HepG2 (cell line): ENCODE measurements at regions of chr6 and their contacts with region 1.

Region 1: GRCh38 chr6:56902641-56903464 is 52.1 kb upstream of the BEND6 start:
- DNase-seq: peak; percentile 25
- ATAC-seq: peak; percentile 54
- H3K4me3 ChIP-seq: no peak overlapping the region
- H3K27ac ChIP-seq: no peak overlapping the region
- H3K4me1 ChIP-seq: peaks cover 11% of the 10 kb centered on the region; the same call in 1 of the 2 replicates
- H3K27me3 ChIP-seq: peaks cover 0 to 1% of the 10 kb centered on the region in 2 experiments; a peak in 1 of 5 replicates
- CTCF ChIP-seq: peak; percentile 67
- EP300 ChIP-seq: no peak
- POLR2A ChIP-seq: no peak
- RAD21 ChIP-seq: peak; percentile 28; the same call in 1 of the 2 replicates

Region 2: GRCh38 chr6:56862415-56863175 is 40.3 kb before region 1 on chr6:
- CTCF ChIA-PET with region 1: no interaction called
- POLR2A ChIA-PET with region 1: no interaction called
- in situ Hi-C with region 1: no loop called
- intact Hi-C with region 1: no loop called
- DNase-seq: no peak
- ATAC-seq: no peak
- H3K4me3 ChIP-seq: no peak overlapping the region
- H3K27ac ChIP-seq: no peak overlapping the region
- H3K4me1 ChIP-seq: 0 out of 2 replicates have a peak, but pooled peaks cover 11% of the 10 kb centered on the region
- H3K27me3 ChIP-seq: no peaks in the 10 kb centered on the region
- CTCF ChIP-seq: no peak
- EP300 ChIP-seq: no peak
- POLR2A ChIP-seq: no peak
- RAD21 ChIP-seq: no peak

Region 3: DNA sequence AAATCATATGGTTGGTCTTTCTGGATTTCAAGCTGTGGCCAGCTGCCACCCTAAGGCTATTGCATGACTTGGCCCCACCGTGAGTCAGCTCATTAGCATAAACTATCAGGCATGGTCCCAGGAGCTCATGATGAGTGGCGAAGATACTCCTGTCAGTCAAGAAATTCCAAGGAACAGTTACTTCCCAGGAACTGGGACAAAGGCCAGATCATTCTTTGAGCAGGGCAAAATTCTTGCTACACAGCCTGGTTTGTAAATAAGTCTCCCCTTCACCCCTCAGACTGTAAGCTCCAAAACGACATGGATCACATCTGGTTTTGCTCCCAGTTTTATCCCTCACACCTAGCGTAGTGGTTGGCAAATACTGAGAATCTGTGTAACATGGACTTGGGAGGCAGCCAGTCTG is 110.7 kb after region 1 on chr6:
- CTCF ChIA-PET with region 1: no interaction called
- POLR2A ChIA-PET with region 1: no interaction called
- in situ Hi-C with region 1: loop called (anchors 10 kb)
- intact Hi-C with region 1: no loop called
- DNase-seq: no peak
- ATAC-seq: no peak
- H3K4me3 ChIP-seq: no peak overlapping the region
- H3K27ac ChIP-seq: no peak overlapping the region
- H3K4me1 ChIP-seq: no peaks in the 10 kb centered on the region
- H3K27me3 ChIP-seq: peaks cover 0 to 4% of the 10 kb centered on the region in 2 experiments; a peak in 1 of 5 replicates
- CTCF ChIP-seq: no peak
- EP300 ChIP-seq: no peak
- POLR2A ChIP-seq: no peak
- RAD21 ChIP-seq: no peak

Region 4: DNA sequence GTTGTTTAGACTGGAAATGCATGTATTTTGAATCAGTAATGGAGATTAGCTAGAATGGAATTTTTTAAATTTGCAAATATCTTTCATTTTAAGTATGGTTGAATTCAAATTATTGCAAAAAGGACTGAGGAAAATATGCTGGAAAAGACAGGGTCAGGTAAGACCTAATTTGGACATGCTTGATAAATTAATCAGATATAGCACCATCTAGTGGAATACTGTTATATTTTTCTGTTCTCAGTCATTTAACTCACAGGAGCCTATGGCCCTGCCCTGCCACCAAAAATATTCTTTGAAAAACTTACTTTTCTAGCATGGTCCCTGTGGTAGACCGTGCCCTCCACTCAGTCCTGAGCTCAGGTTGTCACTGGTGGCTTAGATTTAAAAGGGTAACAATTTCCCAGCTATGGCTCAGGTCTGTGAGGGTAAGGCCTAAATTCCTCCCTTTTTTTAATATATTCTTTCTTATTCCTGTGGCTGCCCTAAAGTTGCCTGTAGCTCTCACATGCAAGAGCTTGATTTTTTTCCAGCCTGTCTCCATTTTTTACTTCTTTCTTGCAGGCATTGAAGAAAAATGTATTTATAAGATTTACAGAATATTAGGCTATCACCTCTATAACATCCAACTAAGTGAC is 118.3 kb after region 1 on chr6:
- CTCF ChIA-PET with region 1: interaction called, 24 read pairs
- POLR2A ChIA-PET with region 1: no interaction called
- in situ Hi-C with region 1: loop called (anchors 10 kb)
- intact Hi-C with region 1: loop called (anchors 1 kb)
- DNase-seq: peak; percentile 46
- ATAC-seq: peak; percentile 91
- H3K4me3 ChIP-seq: no peak overlapping the region
- H3K27ac ChIP-seq: no peak overlapping the region
- H3K4me1 ChIP-seq: no peaks in the 10 kb centered on the region
- H3K27me3 ChIP-seq: peaks cover 0 to 4% of the 10 kb centered on the region in 2 experiments; a peak in 1 of 5 replicates
- CTCF ChIP-seq: peak; percentile 65
- EP300 ChIP-seq: no peak
- POLR2A ChIP-seq: no peak
- RAD21 ChIP-seq: no peak

Region 5: DNA sequence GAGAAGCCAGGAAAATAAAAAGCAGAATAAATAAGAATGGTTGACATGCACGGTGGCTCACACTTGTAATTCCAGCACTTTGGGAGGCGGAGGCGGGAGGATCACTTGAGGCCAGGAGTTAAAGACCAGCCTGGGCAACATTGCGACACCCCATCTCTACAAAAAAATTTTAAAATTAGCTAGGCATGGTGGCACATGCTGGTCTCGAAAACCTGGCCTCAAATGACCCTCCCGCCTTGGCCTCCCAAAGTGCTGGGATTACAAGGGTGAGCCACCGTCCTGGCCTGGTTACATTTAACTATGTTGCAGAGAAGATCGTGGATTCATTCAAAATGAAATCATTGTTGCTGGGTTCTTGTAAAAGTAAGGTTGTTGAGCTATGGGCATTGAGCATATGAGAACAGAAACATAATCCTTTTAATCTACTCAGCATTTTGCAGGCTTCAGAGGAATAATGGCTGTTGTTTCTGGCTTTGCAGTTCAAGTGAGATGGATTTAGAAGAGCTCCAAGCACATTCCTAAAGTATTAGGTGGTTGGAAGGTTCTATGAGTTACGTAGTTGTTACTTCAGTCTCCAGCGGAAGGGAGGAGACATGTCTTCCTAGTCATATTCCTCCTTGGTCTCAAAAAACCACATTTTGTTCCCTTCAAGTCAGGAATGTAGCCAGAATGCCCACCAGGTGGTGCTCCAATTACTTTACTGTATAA is 364.9 kb after region 1 on chr6:
- CTCF ChIA-PET with region 1: no interaction called
- POLR2A ChIA-PET with region 1: no interaction called
- in situ Hi-C with region 1: no loop called
- intact Hi-C with region 1: loop called (anchors 5 kb)
- DNase-seq: peak; percentile 65
- ATAC-seq: peak; percentile 91
- H3K4me3 ChIP-seq: no peak overlapping the region
- H3K27ac ChIP-seq: no peak overlapping the region
- H3K4me1 ChIP-seq: no peaks in the 10 kb centered on the region
- H3K27me3 ChIP-seq: no peaks in the 10 kb centered on the region; a peak in 1 of 5 replicates
- CTCF ChIP-seq: peak; percentile 77
- EP300 ChIP-seq: no peak
- POLR2A ChIP-seq: no peak
- RAD21 ChIP-seq: peak; percentile 62; the same call in 1 of the 2 replicates